ENCODE measurements at regions of chr19 and their contacts with region 1.

Region 1: GRCh38 chr19:20661150-20661819 is at the start of gene ZNF626:
- DNase-seq: peak; percentile 99
- ATAC-seq: peak; percentile 98 to 99
- total RNA-seq, gene ZNF626: 7.6 to 8.7 TPM

Region 2: GRCh38 chr19:20612711-20613316 is 48.5 kb before region 1 on chr19:
- intact Hi-C with region 1: no loop called
- DNase-seq: no peak
- ATAC-seq: no peak

Region 3: GRCh38 chr19:20923077-20923871 is 262.0 kb after region 1 on chr19 and contains the start of gene ZNF85:
- intact Hi-C with region 1: loop called in 1 of 2 experiments (anchors 10 kb)
- DNase-seq: peak; percentile 92
- ATAC-seq: peak; percentile 100
- total RNA-seq, gene ZNF85: 2.3 to 2.8 TPM

Region 4: GRCh38 chr19:21141787-21142464 is 480.6 kb after region 1 on chr19 and contains the start of gene ZNF431:
- intact Hi-C with region 1: loop called in 1 of 2 experiments (anchors 10 kb)
- DNase-seq: peak; percentile 94
- ATAC-seq: peak; percentile 100
- total RNA-seq, gene ZNF431: 6.8 to 10.9 TPM

Region 5: DNA sequence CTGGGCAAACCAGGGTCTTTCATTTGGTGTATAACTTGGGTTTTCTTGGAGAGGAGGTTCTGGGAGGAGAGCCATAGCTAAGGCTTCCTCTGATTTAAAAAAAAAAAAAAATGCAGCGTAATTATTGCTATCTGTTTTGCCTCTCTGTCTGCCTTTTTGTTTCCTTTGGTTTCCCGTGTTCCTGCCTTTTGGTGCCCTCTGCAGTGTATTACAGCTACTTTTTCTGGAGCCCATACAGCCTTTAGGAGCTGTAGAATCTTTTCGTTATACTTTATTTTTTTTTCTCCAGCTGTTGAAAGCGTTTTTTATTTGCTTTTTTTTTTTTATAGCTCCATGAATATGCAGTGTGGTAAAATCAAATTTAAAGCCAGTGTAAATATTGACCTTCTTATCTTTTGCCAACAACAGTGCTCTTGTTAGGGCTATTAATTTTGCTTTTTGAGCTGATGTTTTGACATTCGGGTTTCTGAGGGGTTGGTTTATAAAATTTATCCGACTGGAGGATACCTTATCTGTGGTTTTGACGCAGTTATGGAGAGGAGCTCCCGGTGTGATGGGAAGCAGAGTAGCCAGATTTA is 773.8 kb after region 1 on chr19:
- intact Hi-C with region 1: no loop called
- DNase-seq: no peak
- ATAC-seq: no peak

Measured in left cardiac atrium (tissue), 4 donors.